ENCODE measurements at regions of chr4 and their contacts with region 1.

Region 1: GRCh38 chr4:85747882-85748491 is 273.0 kb downstream of the ARHGAP24 start:
- DNase-seq: peak; percentile 75
- ATAC-seq: peak; percentile 68
- H3K4me3 ChIP-seq: no peak overlapping the region
- H3K27ac ChIP-seq: no peak overlapping the region
- H3K4me1 ChIP-seq: peaks cover 18% of the 10 kb centered on the region
- H3K27me3 ChIP-seq: no peaks in the 10 kb centered on the region
- CTCF ChIP-seq: peak; percentile 81

Region 2: DNA sequence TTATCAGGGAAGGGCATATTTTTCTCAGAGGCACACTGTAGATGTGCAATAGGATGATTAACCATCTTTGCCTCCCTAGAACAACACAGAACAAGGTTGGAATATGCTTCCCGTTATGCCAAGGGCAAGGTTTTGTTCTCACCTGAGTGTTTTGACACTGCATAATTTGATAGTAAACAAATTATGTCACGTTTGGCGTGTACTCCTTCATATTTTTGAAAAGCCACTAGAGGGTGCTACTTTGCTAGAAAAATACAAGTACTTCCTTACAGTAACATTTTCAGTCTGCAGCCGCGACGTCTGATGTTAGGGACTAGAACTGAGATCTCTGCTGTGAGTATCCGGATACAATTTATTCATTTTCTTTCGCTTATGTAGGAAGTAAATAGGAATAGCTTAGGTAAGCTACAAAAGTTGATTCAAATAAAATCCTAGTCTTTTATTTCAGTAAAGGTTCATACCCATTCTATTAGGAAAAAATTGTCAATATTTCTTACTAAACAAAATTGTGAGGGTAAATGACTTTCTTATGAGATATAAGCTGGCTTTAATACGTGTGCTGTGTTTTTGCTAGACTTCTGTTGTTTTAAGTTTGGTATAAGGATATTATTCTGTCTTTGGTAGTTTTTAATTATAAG is 600.4 kb before region 1 on chr4:
- CTCF ChIA-PET with region 1: no interaction called
- POLR2A ChIA-PET with region 1: no interaction called
- intact Hi-C with region 1: loop called (anchors 2 kb)
- DNase-seq: peak; percentile 68
- ATAC-seq: peak; percentile 79
- H3K4me3 ChIP-seq: no peak overlapping the region
- H3K27ac ChIP-seq: no peak overlapping the region
- H3K4me1 ChIP-seq: no peaks in the 10 kb centered on the region
- H3K27me3 ChIP-seq: peaks cover 3% of the 10 kb centered on the region; the same call in 1 of the 2 replicates
- CTCF ChIP-seq: peak; percentile 69

Region 3: GRCh38 chr4:85419103-85419502 is 328.9 kb before region 1 on chr4:
- CTCF ChIA-PET with region 1: interaction called, 5 read pairs
- POLR2A ChIA-PET with region 1: no interaction called
- intact Hi-C with region 1: loop called (anchors 2 kb)
- DNase-seq: no peak
- ATAC-seq: no peak
- H3K4me3 ChIP-seq: no peak overlapping the region
- H3K27ac ChIP-seq: no peak overlapping the region
- H3K4me1 ChIP-seq: peaks cover 7% of the 10 kb centered on the region; the same call in 1 of the 2 replicates
- H3K27me3 ChIP-seq: no peaks in the 10 kb centered on the region
- CTCF ChIP-seq: no peak

Region 4: GRCh38 chr4:85548116-85548515 is 199.9 kb before region 1 on chr4:
- CTCF ChIA-PET with region 1: no interaction called
- POLR2A ChIA-PET with region 1: no interaction called
- intact Hi-C with region 1: loop called (anchors 1 kb)
- DNase-seq: no peak
- ATAC-seq: peak; percentile 55; the same call in 1 of the 2 replicates
- H3K4me3 ChIP-seq: no peak overlapping the region
- H3K27ac ChIP-seq: no peak overlapping the region
- H3K4me1 ChIP-seq: no peaks in the 10 kb centered on the region
- H3K27me3 ChIP-seq: no peaks in the 10 kb centered on the region
- CTCF ChIP-seq: no peak

Region 5: DNA sequence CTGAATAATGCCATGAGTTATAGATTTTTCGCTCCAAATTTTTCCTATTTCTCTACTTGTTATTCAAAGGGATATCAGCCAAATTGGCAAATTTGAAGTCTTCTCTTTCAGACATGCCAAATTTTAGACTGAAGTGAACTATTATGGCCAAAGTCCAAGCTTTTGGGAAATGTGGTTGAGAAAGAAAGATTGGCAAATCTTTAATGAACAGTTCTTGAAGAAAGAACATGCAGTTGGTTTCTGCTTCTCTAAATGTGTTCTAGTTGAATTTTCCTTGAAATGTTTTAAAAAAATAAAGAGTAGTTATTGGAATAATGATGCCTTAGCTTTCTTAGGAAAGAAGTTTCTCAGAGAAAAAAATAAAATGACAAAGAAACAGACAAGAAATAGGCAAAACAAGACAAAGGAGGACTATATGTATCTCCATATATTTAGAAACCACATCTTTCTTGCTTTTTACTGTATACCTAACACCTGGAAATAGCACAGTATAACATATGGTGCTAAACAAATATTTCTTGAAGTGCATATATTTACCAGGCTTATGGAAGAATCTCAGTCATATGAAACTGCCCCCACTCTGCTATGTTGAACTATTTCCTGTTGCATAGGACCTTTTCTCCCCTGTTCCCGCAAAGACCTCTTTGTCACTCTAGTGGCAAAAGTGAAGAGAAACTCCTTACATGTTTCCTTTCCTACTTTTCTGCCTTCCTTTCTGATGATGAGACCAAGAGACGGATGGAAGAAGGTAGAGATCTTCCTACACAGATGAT is 23.0 kb before region 1 on chr4:
- CTCF ChIA-PET with region 1: no interaction called
- POLR2A ChIA-PET with region 1: no interaction called
- intact Hi-C with region 1: no loop called
- DNase-seq: no peak
- ATAC-seq: no peak
- H3K4me3 ChIP-seq: no peak overlapping the region
- H3K27ac ChIP-seq: no peak overlapping the region
- H3K4me1 ChIP-seq: no peaks in the 10 kb centered on the region; the same call in 1 of the 2 replicates
- H3K27me3 ChIP-seq: no peaks in the 10 kb centered on the region
- CTCF ChIP-seq: no peak

Region 6: DNA sequence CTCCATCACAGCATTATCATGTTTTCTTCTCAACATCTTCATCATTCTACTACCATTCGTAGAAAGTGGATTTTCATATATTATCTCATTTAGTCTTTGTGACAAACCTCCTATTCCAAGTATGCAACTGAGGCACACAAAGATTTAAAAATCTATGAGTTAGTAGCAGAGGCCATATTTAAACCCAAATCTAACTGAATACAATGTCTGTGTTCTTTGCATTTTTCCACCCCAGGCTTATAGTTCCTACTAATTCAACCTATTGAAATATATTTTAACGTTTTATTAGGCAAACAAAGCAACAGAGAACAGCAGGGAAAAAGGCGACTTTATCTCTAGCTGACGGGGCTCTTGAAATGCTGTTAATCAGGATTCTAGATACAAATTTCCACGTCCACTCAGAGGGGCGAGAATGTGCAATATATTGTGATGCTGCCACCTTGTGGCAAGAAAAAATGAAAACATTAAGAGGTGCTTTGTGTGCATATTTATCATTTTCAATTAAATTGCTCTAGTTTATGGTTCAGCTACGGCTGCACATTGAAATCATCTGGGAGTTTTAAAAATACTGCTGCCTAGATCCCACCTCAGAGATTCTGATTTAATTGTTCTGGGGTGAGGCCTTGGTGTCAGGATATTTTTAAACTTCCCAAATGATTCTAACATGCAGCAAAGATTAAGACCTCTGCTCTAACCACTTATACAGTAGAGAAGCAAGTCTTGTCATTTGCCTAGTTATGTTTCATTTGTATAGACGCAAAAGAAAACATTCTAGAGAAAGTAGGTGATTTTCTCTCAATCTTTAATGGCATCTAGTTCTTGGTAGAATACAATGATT is 296.0 kb after region 1 on chr4:
- CTCF ChIA-PET with region 1: no interaction called
- POLR2A ChIA-PET with region 1: no interaction called
- intact Hi-C with region 1: loop called (anchors 5 kb)
- DNase-seq: peak; percentile 72
- ATAC-seq: peak; percentile 76
- H3K4me3 ChIP-seq: peak overlapping the region; percentile 22; the same call in 1 of the 2 replicates
- H3K27ac ChIP-seq: no peak overlapping the region
- H3K4me1 ChIP-seq: peaks cover 11% of the 10 kb centered on the region
- H3K27me3 ChIP-seq: no peaks in the 10 kb centered on the region
- CTCF ChIP-seq: peak; percentile 71